PC-9 (cell line): ENCODE measurements at regions of chr13 and their contacts with region 1.

Region 1: DNA sequence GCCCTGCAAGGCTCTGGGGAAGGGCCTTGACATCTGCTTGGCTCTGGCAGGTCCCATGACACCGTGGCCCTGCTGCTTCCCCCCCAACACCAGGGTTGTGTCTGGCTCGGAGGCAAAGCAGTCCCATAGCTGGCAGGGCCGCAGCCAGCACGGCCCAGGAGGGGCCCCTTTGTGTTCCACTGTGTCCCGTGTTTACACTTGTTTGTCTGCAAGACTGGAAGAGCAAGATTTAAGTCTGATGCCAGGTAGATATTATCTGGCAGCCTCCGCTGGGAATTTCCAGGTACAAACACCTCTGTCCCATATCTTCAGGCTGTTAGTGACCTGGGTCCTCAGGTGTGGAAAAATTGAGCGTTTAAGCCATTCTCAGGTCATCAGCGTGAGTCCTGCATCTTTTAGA is 44.3 kb downstream of the MCF2L start:
- DNase-seq: peak; percentile 81 to 97
- H3K4me3 ChIP-seq: peak overlapping the region; percentile 27; the same call in 1 of the 2 replicates
- H3K27ac ChIP-seq: peak overlapping the region; percentile 63
- H3K4me1 ChIP-seq: peaks cover 39% of the 10 kb centered on the region
- H3K27me3 ChIP-seq: no peaks in the 10 kb centered on the region
- CTCF ChIP-seq: no peak

Region 2: GRCh38 chr13:112814905-112815585 is 198.3 kb before region 1 on chr13:
- CTCF ChIA-PET with region 1: no interaction called
- POLR2A ChIA-PET with region 1: no interaction called
- intact Hi-C with region 1: no loop called
- DNase-seq: no peak
- H3K4me3 ChIP-seq: no peak overlapping the region
- H3K27ac ChIP-seq: no peak overlapping the region
- H3K4me1 ChIP-seq: no peaks in the 10 kb centered on the region
- H3K27me3 ChIP-seq: no peaks in the 10 kb centered on the region
- CTCF ChIP-seq: no peak

Region 3: GRCh38 chr13:113001241-113002140 is 11.8 kb before region 1 on chr13:
- CTCF ChIA-PET with region 1: no interaction called
- POLR2A ChIA-PET with region 1: no interaction called
- intact Hi-C with region 1: loop called (anchors 1 kb)
- DNase-seq: peak; percentile 90 to 91
- H3K4me3 ChIP-seq: peak overlapping the region; percentile 72
- H3K27ac ChIP-seq: peak overlapping the region; percentile 58
- H3K4me1 ChIP-seq: peaks cover 32% of the 10 kb centered on the region
- H3K27me3 ChIP-seq: no peaks in the 10 kb centered on the region
- CTCF ChIP-seq: no peak